Activated naive CD4-positive, alpha-beta T cell treated with anti-CD3 and anti-CD28 coated beads for 36 hours (primary cell): ENCODE measurements at regions of chr5 and their contacts with region 1.

Region 1: DNA sequence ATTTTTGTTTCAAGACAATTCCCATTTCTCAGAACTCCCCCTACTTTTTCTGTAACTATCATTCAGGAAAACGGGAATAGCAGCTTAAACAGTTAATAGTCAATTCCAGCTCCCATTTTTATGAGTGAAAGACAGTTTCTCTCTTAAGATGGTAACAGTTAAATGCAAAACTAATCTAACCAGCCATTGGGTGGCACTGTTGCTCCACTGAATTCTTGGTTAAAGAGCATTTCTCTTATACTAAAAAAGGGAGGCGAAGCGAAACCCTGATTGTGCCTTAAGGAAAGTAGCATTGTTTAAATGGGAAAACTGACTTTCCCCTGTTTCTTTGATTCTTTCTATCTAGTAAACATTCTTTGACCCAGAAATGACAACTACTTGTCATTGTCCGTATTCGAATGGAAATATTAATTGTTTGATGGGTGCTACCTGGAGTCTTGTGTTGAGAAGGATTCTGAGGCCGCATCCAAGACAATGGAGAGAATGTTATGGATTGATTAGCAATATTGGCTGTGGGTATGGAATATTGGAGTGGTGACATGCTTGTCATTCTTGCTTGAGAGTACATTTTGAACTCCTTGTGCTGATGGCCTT is 507.8 kb downstream of the MAT2B start:
- DNase-seq: peak; percentile 62
- H3K4me3 Mint-ChIP-seq: no peak overlapping the region
- H3K27ac Mint-ChIP-seq: no peak overlapping the region
- H3K4me1 Mint-ChIP-seq: no peaks in the 10 kb centered on the region
- H3K27me3 Mint-ChIP-seq: no peaks in the 10 kb centered on the region

Region 2: DNA sequence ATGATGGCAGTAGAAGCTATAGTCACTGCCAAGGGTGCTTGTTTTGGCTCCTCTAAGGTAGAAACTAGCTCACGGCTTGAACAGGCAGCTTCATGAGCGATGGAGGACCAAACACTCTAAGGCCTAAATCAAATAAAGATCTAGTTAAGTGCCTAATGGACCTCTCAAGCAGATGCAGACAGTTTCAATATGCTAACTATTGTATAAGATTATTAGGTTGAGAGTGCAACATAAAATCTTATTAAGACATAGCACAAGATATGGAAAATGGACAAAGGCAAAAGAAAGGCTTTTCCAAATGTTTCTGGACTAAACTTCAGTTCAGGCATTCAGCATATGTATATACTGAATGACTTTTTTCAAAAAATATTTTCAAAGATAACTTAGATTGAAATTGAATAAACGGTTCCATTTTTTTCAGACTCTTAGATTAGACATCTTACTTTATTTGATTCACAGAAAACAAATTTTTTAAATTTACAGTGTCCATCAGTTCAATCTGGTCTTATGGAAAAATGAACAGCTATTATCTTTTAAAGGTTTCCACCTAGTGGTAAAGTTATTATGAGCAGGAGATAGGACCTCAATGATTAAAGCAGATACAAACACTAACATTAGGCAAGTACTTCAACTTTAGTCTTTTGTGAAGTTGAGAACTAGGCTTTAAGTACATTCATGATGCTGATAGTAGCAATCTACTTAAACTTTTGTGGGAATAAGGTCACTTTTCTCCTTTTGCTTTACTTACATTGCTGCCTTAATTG is 659.9 kb after region 1 on chr5:
- CTCF ChIA-PET with region 1: no interaction called
- intact Hi-C with region 1: loop called (anchors 2 kb)
- DNase-seq: no peak
- H3K4me3 Mint-ChIP-seq: no peak overlapping the region
- H3K27ac Mint-ChIP-seq: no peak overlapping the region
- H3K4me1 Mint-ChIP-seq: no peaks in the 10 kb centered on the region
- H3K27me3 Mint-ChIP-seq: no peaks in the 10 kb centered on the region

Region 3: GRCh38 chr5:164844348-164844747 is 831.2 kb after region 1 on chr5:
- CTCF ChIA-PET with region 1: no interaction called
- intact Hi-C with region 1: no loop called
- DNase-seq: no peak
- H3K4me3 Mint-ChIP-seq: no peak overlapping the region
- H3K27ac Mint-ChIP-seq: no peak overlapping the region
- H3K4me1 Mint-ChIP-seq: no peaks in the 10 kb centered on the region
- H3K27me3 Mint-ChIP-seq: no peaks in the 10 kb centered on the region

Region 4: DNA sequence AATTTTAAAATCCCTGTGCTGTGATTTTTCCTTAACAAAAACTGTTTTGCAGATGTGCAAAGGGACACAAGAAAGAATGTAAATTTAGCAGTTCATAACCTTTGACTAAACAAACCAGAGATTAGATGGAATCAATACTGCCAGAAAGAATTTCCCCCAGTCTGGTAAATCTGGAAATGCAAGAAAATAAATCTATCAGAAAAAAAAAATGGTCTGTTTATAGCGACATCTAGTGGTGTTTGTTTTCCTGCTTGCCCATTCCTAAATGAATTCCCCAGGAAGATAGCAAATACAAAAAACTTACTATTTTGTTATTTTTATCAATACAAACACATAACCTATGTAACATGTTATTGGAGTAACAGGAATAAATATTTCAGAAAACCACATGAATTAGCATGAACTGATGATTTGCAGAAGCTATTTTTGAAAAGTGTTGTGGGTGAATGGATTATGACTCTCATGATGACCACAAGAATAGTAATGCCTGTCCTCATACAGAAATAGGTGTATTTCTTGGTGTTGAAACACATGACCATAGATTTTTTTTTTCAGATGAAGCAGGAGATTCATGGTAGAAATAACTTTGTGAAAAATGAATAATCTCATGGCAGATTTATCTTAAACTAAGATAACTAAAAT is 1196.0 kb after region 1 on chr5:
- CTCF ChIA-PET with region 1: no interaction called
- intact Hi-C with region 1: loop called (anchors 2 kb)
- DNase-seq: no peak
- H3K4me3 Mint-ChIP-seq: no peak overlapping the region
- H3K27ac Mint-ChIP-seq: no peak overlapping the region
- H3K4me1 Mint-ChIP-seq: no peaks in the 10 kb centered on the region
- H3K27me3 Mint-ChIP-seq: no peaks in the 10 kb centered on the region